ENCODE measurements at regions of chr6 and their contacts with region 1.

Region 1: DNA sequence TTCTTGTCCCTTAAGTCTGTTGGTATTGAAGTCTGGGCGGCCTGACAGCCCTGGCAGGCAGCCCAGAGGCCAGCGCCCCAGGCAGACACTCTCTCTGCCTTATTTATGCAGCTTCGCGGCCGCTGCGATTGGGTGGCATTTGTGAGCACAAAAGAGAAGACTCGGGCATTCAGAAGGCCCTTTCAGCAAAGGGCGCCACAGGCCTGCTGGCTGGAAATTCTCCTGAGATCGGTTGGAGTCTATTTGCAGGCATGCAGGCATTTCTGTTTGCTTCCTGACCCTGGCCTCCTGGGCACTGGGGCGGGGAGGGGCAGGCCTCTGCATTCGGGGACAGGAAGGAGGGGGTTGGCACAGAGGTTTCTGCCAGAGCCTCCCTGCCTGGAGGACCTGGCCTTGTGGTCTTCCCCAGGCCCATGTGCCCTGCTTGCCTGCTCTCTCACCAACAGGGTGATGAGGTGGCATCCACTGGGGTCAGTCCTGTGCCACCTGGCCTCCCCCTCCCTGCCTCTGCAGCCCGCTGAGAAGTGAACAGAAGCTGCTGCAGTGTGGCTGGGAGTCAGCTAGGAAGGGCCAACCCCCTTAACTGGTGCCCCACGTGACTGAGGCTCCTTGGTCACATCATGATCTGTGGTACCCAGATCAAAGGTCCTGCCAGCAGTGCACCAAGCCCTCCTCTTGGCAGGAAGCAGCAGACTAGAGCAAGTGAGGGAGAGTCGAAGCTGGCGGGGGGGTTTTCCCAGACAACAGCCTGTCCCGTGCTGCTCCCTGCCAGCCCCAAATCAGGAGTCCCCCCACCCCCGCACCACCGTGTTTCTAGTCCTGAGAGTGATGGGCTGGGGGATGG is 16.6 kb upstream of the CCDC167 start:
- DNase-seq: peak; percentile 95
- ATAC-seq: peak; percentile 78
- H3K4me3 Mint-ChIP-seq: peak overlapping the region; percentile 70
- H3K27ac Mint-ChIP-seq: peak overlapping the region; percentile 91
- H3K4me1 Mint-ChIP-seq: peaks cover 84% of the 10 kb centered on the region
- H3K27me3 Mint-ChIP-seq: no peaks in the 10 kb centered on the region

Region 2: GRCh38 chr6:37257634-37258404 is 258.5 kb before region 1 on chr6 and contains the starts of genes TBC1D22B and TMEM217:
- CTCF ChIA-PET with region 1: no interaction called
- POLR2A ChIA-PET with region 1: no interaction called
- intact Hi-C with region 1: loop called in 1 of 2 experiments (anchors 2 kb)
- DNase-seq: peak; percentile 98
- ATAC-seq: peak; percentile 99
- H3K4me3 Mint-ChIP-seq: peak within 1 kb of the TSS; percentile 74
- H3K27ac Mint-ChIP-seq: peak within 1 kb of the TSS; percentile 94
- H3K4me1 Mint-ChIP-seq: peaks cover 45% of the 10 kb centered on the region
- H3K27me3 Mint-ChIP-seq: no peaks in the 10 kb centered on the region
- total RNA-seq, gene TBC1D22B: 14.9 to 17.0 TPM
- total RNA-seq, gene TMEM217: 2.5 TPM

Region 3: DNA sequence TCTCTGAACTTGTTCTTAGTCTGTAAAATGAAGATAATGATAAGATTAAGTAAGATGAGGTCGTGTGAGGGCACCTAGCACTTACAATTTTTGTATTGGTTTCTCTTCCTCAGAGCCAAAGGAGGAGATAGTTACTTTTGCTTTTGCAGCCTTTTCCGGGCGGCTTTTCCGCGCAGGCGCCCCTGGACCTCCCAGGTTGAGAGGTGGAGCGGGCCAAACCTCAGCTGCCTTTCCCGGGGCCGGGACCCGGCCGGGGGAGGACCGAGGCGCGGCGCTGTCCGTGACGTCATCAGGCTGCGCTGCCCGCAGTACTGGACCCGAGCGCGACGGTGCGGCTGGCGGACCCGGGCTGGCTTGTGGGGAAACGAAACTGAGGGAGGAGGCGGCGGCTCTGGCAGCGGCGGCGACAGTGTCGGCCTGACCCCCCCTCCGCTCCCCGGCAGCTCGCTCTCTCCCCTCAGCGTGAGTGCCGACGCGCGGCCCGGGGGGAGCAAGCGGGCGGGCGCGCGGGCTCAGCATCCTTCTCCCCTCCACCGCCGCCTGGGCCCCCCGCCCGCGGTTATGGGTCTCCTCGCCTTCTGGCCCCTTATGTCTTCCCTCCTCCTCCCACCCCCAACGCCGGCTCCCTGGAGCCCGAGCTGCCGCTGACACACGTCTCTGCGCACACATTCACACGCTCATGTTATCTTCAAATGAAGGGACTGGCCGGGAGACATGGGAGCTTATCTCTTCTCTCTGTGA is 83.2 kb before region 1 on chr6 and contains the start of gene CMTR1:
- CTCF ChIA-PET with region 1: interaction called, 4 read pairs
- POLR2A ChIA-PET with region 1: no interaction called
- intact Hi-C with region 1: loop called in 1 of 2 experiments (anchors 1 kb)
- DNase-seq: peak; percentile 98
- ATAC-seq: peak; percentile 88
- H3K4me3 Mint-ChIP-seq: peak within 1 kb of the TSS; percentile 98
- H3K27ac Mint-ChIP-seq: peak within 1 kb of the TSS; percentile 99
- H3K4me1 Mint-ChIP-seq: peaks cover 36% of the 10 kb centered on the region
- H3K27me3 Mint-ChIP-seq: peaks cover 4% of the 10 kb centered on the region
- total RNA-seq, gene CMTR1: 65.3 to 74.6 TPM

Region 4: DNA sequence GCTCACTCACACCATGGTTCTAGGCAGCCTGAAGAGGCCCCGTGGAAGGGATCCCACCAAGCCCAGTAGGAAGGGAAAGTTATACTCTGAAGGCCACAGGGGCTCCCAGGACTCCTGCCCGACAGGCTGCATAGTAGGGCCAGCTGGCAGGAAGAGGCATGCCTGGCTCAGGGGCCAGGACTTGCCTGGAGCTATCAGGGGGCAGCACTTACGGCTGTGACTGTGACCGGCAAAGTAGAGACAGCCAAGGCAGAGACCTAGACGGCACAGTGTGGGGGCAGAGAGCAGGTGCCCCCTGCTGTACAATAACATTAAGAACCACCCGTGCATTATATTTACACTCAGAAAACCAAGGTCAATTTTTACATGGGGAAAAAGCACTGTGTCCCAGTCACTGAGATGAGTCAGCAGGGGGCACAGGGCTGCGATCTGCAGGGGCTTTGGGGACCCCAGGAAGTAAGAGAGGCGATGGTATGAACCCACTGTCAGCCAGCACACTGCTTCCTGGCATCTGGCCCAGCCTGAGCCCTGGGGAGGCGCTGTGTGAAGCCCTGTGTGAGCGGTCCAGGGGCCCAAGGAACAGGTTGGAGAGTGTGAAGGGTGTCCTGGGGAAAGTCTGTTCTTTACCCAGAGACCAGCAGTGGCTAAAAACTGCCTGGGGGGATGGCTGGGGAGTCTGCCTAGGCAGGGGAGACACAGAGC is 26.5 kb before region 1 on chr6:
- CTCF ChIA-PET with region 1: interaction called, 8 read pairs
- POLR2A ChIA-PET with region 1: interaction called, 22 read pairs
- intact Hi-C with region 1: loop called (anchors 1 kb)
- DNase-seq: peak; percentile 42
- ATAC-seq: no peak
- H3K4me3 Mint-ChIP-seq: no peak overlapping the region
- H3K27ac Mint-ChIP-seq: peak overlapping the region; percentile 58
- H3K4me1 Mint-ChIP-seq: peaks cover 67% of the 10 kb centered on the region
- H3K27me3 Mint-ChIP-seq: no peaks in the 10 kb centered on the region

Region 5: GRCh38 chr6:37550191-37550965 is 34.1 kb after region 1 on chr6:
- CTCF ChIA-PET with region 1: interaction called, 3 read pairs
- POLR2A ChIA-PET with region 1: interaction called, 4 read pairs
- intact Hi-C with region 1: loop called (anchors 1 kb)
- DNase-seq: no peak
- ATAC-seq: no peak
- H3K4me3 Mint-ChIP-seq: no peak overlapping the region
- H3K27ac Mint-ChIP-seq: no peak overlapping the region
- H3K4me1 Mint-ChIP-seq: peaks cover 47% of the 10 kb centered on the region
- H3K27me3 Mint-ChIP-seq: peaks cover 2% of the 10 kb centered on the region

Region 6: GRCh38 chr6:37622646-37623071 is 106.4 kb after region 1 on chr6:
- CTCF ChIA-PET with region 1: no interaction called
- POLR2A ChIA-PET with region 1: no interaction called
- intact Hi-C with region 1: loop called in 1 of 2 experiments (anchors 1 kb)
- DNase-seq: peak; percentile 74
- ATAC-seq: peak; percentile 87
- H3K4me3 Mint-ChIP-seq: no peak overlapping the region
- H3K27ac Mint-ChIP-seq: peak overlapping the region; percentile 80
- H3K4me1 Mint-ChIP-seq: peaks cover 52% of the 10 kb centered on the region
- H3K27me3 Mint-ChIP-seq: peaks cover 9% of the 10 kb centered on the region

Region 7: DNA sequence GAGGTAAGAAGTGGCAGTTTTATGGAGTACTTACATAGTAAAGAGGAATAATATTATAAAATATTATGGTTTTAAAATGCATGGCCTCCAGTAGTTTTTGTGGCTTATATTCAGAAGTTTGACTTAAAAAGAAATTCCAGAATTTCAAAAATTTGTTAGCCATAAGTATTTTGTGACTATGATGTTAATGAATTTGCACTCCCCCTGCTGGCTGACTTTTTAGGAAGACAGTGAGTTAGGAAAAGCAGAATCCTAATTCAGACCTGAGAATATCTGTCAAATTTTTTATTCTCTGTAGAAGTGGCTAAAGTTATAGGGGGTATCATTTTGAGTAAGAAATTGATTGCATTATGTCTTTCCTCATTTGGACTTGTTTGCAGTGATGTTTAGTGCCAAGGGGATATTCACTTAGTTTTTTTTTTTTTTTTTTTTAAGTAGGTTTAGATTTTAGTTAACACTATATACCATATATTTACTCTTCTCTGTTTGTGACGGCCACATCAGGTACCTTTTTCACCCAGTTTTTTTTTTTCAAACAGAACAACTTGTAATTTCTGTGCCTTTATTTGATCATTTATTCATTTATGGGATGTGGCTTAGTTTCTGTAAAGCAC is 344.0 kb after region 1 on chr6:
- CTCF ChIA-PET with region 1: no interaction called
- POLR2A ChIA-PET with region 1: no interaction called
- intact Hi-C with region 1: loop called in 1 of 2 experiments (anchors 10 kb)
- DNase-seq: peak; percentile 24
- ATAC-seq: no peak
- H3K4me3 Mint-ChIP-seq: no peak overlapping the region
- H3K27ac Mint-ChIP-seq: no peak overlapping the region
- H3K4me1 Mint-ChIP-seq: peaks cover 77% of the 10 kb centered on the region
- H3K27me3 Mint-ChIP-seq: no peaks in the 10 kb centered on the region

Measured in activated CD4-positive, alpha-beta T cell treated with anti-CD3 and anti-CD28 coated beads for 36 hours (primary cell).